CD8-positive, alpha-beta T cell (primary cell): ENCODE measurements at regions of chr15 and their contacts with region 1.

Region 1: GRCh38 chr15:38474155-38474757 is 20.3 kb downstream of the FAM98B start:
- DNase-seq: peak in 7 of 9 experiments; percentile 13 to 85 (median 32)
- ATAC-seq: peak; percentile 99
- H3K4me3 ChIP-seq: no peak overlapping the region
- H3K4me3 Mint-ChIP-seq: no peak overlapping the region
- H3K27ac ChIP-seq: peak overlapping the region in 1 of 2 experiments; percentile 17
- H3K27ac Mint-ChIP-seq: peak overlapping the region; percentile 37
- H3K4me1 ChIP-seq: no peaks in the 10 kb centered on the region
- H3K4me1 Mint-ChIP-seq: peaks cover 9% of the 10 kb centered on the region
- H3K27me3 ChIP-seq: no peaks in the 10 kb centered on the region
- H3K27me3 Mint-ChIP-seq: no peaks in the 10 kb centered on the region
- CTCF ChIP-seq: peak; percentile 74

Region 2: GRCh38 chr15:38508647-38509046 is 34.4 kb after region 1 on chr15:
- CTCF ChIA-PET with region 1: interaction called, 4 read pairs
- POLR2A ChIA-PET with region 1: no interaction called
- intact Hi-C with region 1: loop called in 1 of 2 experiments (anchors 5 kb)
- DNase-seq: no peak
- ATAC-seq: no peak
- H3K4me3 ChIP-seq: no peak overlapping the region
- H3K4me3 Mint-ChIP-seq: no peak overlapping the region
- H3K27ac ChIP-seq: peak overlapping the region in 1 of 2 experiments; percentile 17
- H3K27ac Mint-ChIP-seq: peak overlapping the region; percentile 80
- H3K4me1 ChIP-seq: no peaks in the 10 kb centered on the region
- H3K4me1 Mint-ChIP-seq: peaks cover 10% of the 10 kb centered on the region
- H3K27me3 ChIP-seq: no peaks in the 10 kb centered on the region
- H3K27me3 Mint-ChIP-seq: no peaks in the 10 kb centered on the region
- CTCF ChIP-seq: no peak

Region 3: GRCh38 chr15:38817427-38818156 is 343.3 kb after region 1 on chr15:
- CTCF ChIA-PET with region 1: interaction called, 3 read pairs
- POLR2A ChIA-PET with region 1: no interaction called
- intact Hi-C with region 1: loop called (anchors 5 to 10 kb)
- DNase-seq: peak; percentile 69 to 90 (median 78)
- ATAC-seq: peak; percentile 96
- H3K4me3 ChIP-seq: no peak overlapping the region
- H3K4me3 Mint-ChIP-seq: no peak overlapping the region
- H3K27ac ChIP-seq: no peak overlapping the region
- H3K27ac Mint-ChIP-seq: no peak overlapping the region
- H3K4me1 ChIP-seq: peaks cover 3% of the 10 kb centered on the region
- H3K4me1 Mint-ChIP-seq: peaks cover 5% of the 10 kb centered on the region
- H3K27me3 ChIP-seq: no peaks in the 10 kb centered on the region
- H3K27me3 Mint-ChIP-seq: peaks cover 4% of the 10 kb centered on the region
- CTCF ChIP-seq: peak; percentile 98

Region 4: DNA sequence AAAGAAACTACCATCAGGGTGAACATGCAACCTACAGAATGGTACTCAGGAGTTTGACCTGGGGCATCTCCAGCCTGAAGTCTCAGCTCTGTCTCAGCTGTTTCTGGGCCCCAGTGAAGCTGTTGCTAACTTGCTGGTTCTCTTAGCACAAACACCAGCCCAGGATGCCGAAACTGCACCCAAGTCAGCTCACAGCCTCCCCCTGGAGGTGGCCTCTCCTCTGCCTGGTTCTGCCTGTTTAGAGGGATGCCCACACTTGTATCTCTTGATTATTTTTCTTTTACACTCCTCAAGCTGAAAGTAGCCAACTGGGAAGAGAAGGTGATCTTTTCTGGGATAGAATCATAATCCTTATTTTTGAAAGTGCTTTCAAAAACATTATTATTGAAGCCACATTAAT is 379.4 kb after region 1 on chr15:
- CTCF ChIA-PET with region 1: no interaction called
- POLR2A ChIA-PET with region 1: no interaction called
- intact Hi-C with region 1: loop called (anchors 1 to 10 kb)
- DNase-seq: peak in 7 of 9 experiments; percentile 2 to 51 (median 31)
- ATAC-seq: no peak
- H3K4me3 ChIP-seq: no peak overlapping the region
- H3K4me3 Mint-ChIP-seq: no peak overlapping the region
- H3K27ac ChIP-seq: no peak overlapping the region
- H3K27ac Mint-ChIP-seq: no peak overlapping the region
- H3K4me1 ChIP-seq: no peaks in the 10 kb centered on the region
- H3K4me1 Mint-ChIP-seq: no peaks in the 10 kb centered on the region
- H3K27me3 ChIP-seq: no peaks in the 10 kb centered on the region
- H3K27me3 Mint-ChIP-seq: peaks cover 23% of the 10 kb centered on the region
- CTCF ChIP-seq: no peak

Region 5: GRCh38 chr15:39016706-39017105 is 542.5 kb after region 1 on chr15:
- CTCF ChIA-PET with region 1: no interaction called
- POLR2A ChIA-PET with region 1: no interaction called
- intact Hi-C with region 1: no loop called
- DNase-seq: no peak
- ATAC-seq: no peak
- H3K4me3 ChIP-seq: no peak overlapping the region
- H3K4me3 Mint-ChIP-seq: no peak overlapping the region
- H3K27ac ChIP-seq: no peak overlapping the region
- H3K27ac Mint-ChIP-seq: no peak overlapping the region
- H3K4me1 ChIP-seq: no peaks in the 10 kb centered on the region
- H3K4me1 Mint-ChIP-seq: no peaks in the 10 kb centered on the region
- H3K27me3 ChIP-seq: no peaks in the 10 kb centered on the region
- H3K27me3 Mint-ChIP-seq: peaks cover 5% of the 10 kb centered on the region
- CTCF ChIP-seq: no peak